ENCODE measurements at regions of chr13 and their contacts with region 1.

Region 1: GRCh38 chr13:100674848-100675660 is 459 bp upstream of the TMTC4 start:
- DNase-seq: peak; percentile 98
- ATAC-seq: peak; percentile 93
- H3K4me3 ChIP-seq: peak overlapping the region; percentile 55 to 84 (median 76)
- H3K4me3 Mint-ChIP-seq: peak overlapping the region; percentile 91
- H3K27ac ChIP-seq: peak overlapping the region in 1 of 2 donors; percentile 48
- H3K27ac Mint-ChIP-seq: peak overlapping the region; percentile 89
- H3K4me1 ChIP-seq: peaks cover 13 to 19% of the 10 kb centered on the region in 2 donors
- H3K4me1 Mint-ChIP-seq: peaks cover 13% of the 10 kb centered on the region
- H3K27me3 ChIP-seq: no peaks in the 10 kb centered on the region
- H3K27me3 Mint-ChIP-seq: peaks cover 9% of the 10 kb centered on the region
- CTCF ChIP-seq: peak; percentile 25

Region 2: DNA sequence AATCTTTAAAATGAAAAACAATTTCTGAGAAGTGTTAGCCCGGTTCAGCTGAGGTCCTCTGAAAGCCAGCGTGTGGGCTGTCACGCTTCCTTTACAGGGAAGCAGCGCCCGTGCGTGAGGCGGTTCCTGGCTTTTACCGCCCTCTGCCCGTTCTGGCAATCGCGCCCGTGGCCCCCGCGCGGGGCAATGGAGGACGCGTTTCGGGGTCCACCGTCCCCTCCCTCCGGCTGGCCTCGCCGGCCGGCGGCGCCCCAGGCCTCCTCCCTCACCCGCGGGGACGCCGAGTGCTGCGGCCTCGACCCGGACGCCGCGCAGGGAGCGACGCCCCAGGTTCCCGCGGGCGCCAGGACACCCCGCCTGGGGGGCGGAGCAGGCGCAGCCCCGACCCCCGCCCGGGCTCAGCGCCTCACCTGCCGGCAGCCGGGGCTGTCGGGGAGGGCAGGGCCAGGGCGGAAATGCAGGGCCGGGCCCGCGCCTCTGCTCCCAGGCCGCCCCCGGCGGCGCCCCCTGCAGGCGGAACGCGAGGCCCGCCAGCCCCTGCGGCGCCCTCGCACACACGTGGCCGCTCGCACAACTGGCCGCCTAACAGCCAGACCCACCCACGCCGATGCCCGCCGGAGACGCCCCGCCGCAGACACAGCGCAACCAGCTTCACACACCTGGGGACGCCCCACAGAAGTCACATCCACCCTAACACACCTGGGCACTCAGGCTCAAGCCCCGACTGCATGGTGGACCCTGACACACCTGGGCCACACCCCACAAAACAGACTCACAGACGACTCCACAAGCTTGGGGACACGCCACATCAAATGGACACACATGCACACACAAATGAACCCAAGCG is 86.5 kb before region 1 on chr13 and contains the start of gene GGACT:
- CTCF ChIA-PET with region 1: interaction called, 9 read pairs
- POLR2A ChIA-PET with region 1: interaction called, 3 read pairs
- intact Hi-C with region 1: loop called (anchors 1 kb)
- DNase-seq: peak; percentile 84
- ATAC-seq: peak; percentile 96
- H3K4me3 ChIP-seq: peak within 1 kb of the TSS; percentile 21 to 85 (median 55)
- H3K4me3 Mint-ChIP-seq: peak within 1 kb of the TSS; percentile 90
- H3K27ac ChIP-seq: peak within 1 kb of the TSS; percentile 42 to 74
- H3K27ac Mint-ChIP-seq: peak within 1 kb of the TSS; percentile 82
- H3K4me1 ChIP-seq: peaks cover 10 to 12% of the 10 kb centered on the region in 2 donors
- H3K4me1 Mint-ChIP-seq: peaks cover 20% of the 10 kb centered on the region
- H3K27me3 ChIP-seq: no peaks in the 10 kb centered on the region
- H3K27me3 Mint-ChIP-seq: no peaks in the 10 kb centered on the region
- CTCF ChIP-seq: peak; percentile 81
- total RNA-seq, gene GGACT: 2.9 and 3.5 TPM in 2 replicates

Region 3: GRCh38 chr13:100689191-100689590 is 14.1 kb after region 1 on chr13:
- CTCF ChIA-PET with region 1: no interaction called
- POLR2A ChIA-PET with region 1: no interaction called
- intact Hi-C with region 1: no loop called
- DNase-seq: no peak
- ATAC-seq: no peak
- H3K4me3 ChIP-seq: no peak overlapping the region
- H3K4me3 Mint-ChIP-seq: no peak overlapping the region
- H3K27ac ChIP-seq: no peak overlapping the region
- H3K27ac Mint-ChIP-seq: no peak overlapping the region
- H3K4me1 ChIP-seq: no peaks in the 10 kb centered on the region
- H3K4me1 Mint-ChIP-seq: peaks cover 7% of the 10 kb centered on the region
- H3K27me3 ChIP-seq: peaks cover 0 to 4% (median 0%) of the 10 kb centered on the region in 4 experiments
- H3K27me3 Mint-ChIP-seq: peaks cover 15% of the 10 kb centered on the region
- CTCF ChIP-seq: no peak

Measured in B cell (primary cell).